Colonic mucosa (tissue), 4 donors: ENCODE measurements at regions of chr2 and their contacts with region 1.

Region 1: GRCh38 chr2:70871398-70872211 is 36.0 kb upstream of the CD207 start:
- DNase-seq: peak; percentile 83
- H3K4me3 ChIP-seq: no peak overlapping the region
- H3K27ac ChIP-seq: no peak overlapping the region
- H3K4me1 ChIP-seq: no peaks in the 10 kb centered on the region
- H3K27me3 ChIP-seq: peaks cover 8% of the 10 kb centered on the region
- CTCF ChIP-seq: peak; percentile 87

Region 2: DNA sequence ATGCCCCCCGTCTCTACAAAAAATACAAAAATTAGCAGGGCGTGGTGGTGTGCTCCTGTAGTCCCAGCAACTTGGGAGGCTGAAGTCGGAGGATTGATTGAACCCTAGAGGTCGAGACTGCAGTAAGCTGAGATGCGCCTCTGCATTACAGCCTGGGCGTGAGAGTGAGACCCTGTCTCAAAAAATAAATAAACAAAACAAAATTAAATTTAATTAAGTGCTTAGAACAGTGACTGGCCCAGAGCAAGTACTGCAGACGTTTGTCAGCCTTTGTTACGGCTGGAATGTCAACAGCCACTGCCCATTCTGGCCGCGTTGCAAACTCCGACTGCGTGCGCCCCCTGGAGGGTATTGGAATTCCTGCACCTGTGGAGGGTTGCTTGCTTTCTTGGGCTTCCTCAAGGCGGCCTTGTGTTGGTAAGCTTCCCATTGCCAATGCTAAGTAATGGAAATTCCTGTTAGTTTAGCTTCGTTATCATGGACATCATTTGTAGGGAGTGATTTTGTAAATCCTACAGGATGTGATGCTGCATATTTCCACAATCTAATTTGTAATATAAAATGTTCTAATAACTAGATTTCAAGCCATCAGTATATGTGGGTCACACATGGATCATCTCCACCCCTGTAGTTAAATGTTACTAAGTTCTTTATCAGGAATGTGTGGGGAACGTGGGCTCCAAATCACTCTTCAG is 48.2 kb after region 1 on chr2:
- intact Hi-C with region 1: loop called (anchors 1 kb)
- DNase-seq: peak; percentile 83
- H3K4me3 ChIP-seq: no peak overlapping the region
- H3K27ac ChIP-seq: no peak overlapping the region
- H3K4me1 ChIP-seq: no peaks in the 10 kb centered on the region
- H3K27me3 ChIP-seq: no peaks in the 10 kb centered on the region
- CTCF ChIP-seq: peak; percentile 95

Region 3: GRCh38 chr2:70948337-70949003 is 76.9 kb after region 1 on chr2:
- intact Hi-C with region 1: loop called (anchors 2 kb)
- DNase-seq: peak; percentile 85
- H3K4me3 ChIP-seq: no peak overlapping the region
- H3K27ac ChIP-seq: no peak overlapping the region
- H3K4me1 ChIP-seq: no peaks in the 10 kb centered on the region
- H3K27me3 ChIP-seq: no peaks in the 10 kb centered on the region
- CTCF ChIP-seq: peak; percentile 69